ENCODE measurements at regions of chr17 and their contacts with region 1.

Region 1: DNA sequence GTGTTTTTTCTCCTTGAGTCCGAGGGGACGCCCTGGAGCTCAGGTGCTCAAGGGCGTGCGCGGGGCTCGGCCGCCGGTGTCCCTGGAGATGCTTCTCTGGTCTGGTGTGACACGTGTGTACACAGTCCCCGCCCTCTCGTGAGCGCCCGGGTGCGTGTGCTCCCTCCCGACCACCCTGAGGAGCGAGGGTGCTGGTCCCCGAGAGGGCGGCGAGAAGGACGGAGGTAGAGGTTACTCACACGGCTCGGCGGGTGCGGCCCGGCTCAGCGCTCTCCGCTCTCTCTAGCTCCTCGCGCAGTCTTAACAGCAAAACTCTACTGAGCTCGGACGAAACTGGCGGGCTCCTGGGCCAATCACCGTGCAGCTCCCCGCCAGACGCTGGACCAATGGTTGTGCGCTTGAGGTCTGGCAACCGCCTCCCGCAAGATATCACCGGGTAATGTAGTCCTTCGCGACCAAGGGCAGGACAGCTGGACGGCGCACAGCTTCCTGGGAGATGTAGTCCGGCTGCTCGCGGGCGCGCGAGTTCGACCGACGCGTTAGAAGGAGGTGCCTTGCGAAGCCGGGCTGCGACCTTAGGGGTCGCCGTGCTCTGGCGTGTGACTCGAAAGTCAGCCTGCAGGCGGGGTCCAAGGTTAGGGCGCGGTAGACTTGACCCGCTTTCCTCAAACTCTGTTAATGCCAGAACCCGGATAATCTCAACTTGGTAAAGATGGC is at the start of gene SLC25A19:
- DNase-seq: peak; percentile 98
- ATAC-seq: peak; percentile 98
- H3K4me3 Mint-ChIP-seq: peak within 1 kb of the TSS; percentile 94
- H3K27ac Mint-ChIP-seq: peak within 1 kb of the TSS; percentile 99
- H3K4me1 Mint-ChIP-seq: peaks cover 8% of the 10 kb centered on the region
- H3K27me3 Mint-ChIP-seq: no peaks in the 10 kb centered on the region; the same call in 1 of the 2 replicates
- CTCF ChIP-seq: no peak
- total RNA-seq, gene SLC25A19: 22.6 to 27.7 TPM (median 23.0 TPM) in 3 replicates

Region 2: DNA sequence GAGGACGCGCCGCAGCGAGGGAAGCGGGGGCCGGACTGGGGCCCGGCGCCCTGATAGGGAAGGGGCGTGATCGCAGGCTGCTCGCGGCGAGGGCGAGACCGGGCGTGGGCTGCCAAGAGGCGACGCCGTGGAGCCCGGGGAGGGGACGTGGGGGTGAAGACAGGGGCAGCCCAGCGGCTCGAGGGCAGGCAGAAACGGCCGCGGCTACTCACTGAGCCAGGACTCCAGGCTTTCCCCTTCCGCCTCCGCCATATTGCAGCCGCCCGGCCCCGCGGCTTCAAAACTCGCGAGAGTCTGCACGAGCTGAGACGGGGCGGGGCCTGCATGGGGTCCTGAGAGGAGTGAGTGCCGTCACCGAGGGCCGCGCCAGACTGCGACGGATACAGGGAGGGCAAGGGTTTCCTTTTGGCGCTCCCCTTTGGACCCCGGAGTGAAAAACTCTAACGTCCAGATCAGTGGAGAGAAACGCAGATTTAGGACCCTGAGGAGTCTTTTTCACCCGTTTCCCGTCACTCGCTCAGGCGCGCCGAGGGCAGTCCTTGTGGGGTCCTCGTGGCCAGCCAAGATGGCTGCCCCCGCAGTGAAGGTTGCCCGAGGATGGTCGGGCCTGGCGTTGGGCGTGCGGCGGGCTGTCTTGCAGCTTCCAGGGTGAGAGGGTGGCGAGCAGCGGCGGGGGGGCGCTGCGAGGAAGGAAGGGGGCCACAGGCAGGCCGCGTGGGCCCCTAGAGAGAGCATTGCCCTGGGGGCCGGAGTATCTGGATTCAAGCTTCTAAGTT is 27.7 kb before region 1 on chr17 and contains the starts of genes GGA3 and MRPS7:
- CTCF ChIA-PET with region 1: interaction called, 14 read pairs
- POLR2A ChIA-PET with region 1: interaction called, 10 read pairs
- DNase-seq: peak; percentile 96
- ATAC-seq: peak; percentile 96
- H3K4me3 Mint-ChIP-seq: peak within 1 kb of the TSS; percentile 98
- H3K27ac Mint-ChIP-seq: peak within 1 kb of the TSS; percentile 100
- H3K4me1 Mint-ChIP-seq: peaks cover 26% of the 10 kb centered on the region
- H3K27me3 Mint-ChIP-seq: no peaks in the 10 kb centered on the region
- CTCF ChIP-seq: no peak
- total RNA-seq, gene GGA3: 54.5 to 66.9 TPM (median 62.7 TPM) in 3 replicates
- total RNA-seq, gene MRPS7: 85.8 to 94.7 TPM (median 87.5 TPM) in 3 replicates

Region 3: DNA sequence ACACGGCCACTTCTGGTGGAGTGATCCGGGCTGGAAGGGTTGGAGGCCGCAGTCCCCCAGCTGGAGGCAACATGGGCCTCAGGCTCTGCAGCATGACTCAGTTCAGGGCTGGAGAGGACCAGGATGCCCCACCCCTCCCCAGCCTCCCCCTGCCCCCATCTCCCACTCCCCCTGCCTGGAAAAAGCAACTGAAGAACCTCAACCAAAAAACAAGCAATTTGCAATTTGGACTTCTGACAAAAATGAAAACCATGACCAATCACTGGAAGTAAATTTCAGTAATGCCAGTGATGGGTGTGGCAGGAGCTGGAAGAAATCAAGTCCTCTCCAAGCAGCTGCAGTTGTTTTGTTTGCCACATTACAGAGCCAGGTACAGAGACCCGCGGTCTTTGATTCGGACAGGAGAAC is 11.6 kb before region 1 on chr17:
- CTCF ChIA-PET with region 1: interaction called, 106 read pairs
- POLR2A ChIA-PET with region 1: interaction called, 4 read pairs
- DNase-seq: no peak
- ATAC-seq: no peak
- H3K4me3 Mint-ChIP-seq: no peak overlapping the region
- H3K27ac Mint-ChIP-seq: no peak overlapping the region
- H3K4me1 Mint-ChIP-seq: no peaks in the 10 kb centered on the region
- H3K27me3 Mint-ChIP-seq: no peaks in the 10 kb centered on the region
- CTCF ChIP-seq: no peak

Region 4: DNA sequence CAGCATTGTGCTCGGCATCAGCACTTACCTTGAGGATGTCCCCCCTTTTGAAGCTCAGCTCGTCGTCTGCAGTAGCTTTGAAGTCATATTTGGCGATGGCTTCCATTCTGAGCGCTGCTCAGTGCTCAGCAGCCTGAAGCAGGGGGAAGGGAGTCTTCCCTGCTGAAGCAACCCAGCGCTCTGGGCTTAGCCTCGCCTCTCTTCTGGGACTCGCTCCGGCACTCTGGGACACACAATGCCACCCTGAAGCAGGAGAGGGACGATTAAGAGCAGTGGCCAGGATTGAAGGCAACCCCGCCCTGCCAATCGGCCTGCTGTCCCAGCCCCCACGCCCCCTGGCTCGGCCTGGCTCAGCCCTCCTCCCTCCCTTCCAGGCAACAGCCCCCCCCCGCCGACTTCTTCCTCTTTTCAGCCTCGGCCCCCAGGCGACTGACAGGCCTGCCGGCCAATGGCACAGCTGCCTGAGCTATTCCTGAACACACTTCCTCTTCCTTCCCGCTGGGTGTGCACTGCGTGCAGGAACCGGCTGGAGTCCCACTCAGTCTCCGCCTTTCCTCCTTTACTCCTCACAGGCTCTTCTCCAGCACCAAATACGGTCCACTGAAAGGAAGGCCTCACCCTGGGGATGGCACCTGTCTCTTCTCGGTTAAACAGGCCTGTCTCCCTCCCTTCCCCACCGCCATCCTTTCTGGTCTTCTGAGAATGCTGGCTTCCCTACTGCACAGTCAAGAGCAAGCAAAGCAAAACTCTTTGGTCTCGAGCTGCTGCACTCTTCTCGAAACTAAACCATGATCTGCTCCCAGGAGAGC is 104.5 kb after region 1 on chr17:
- CTCF ChIA-PET with region 1: interaction called, 25 read pairs
- POLR2A ChIA-PET with region 1: interaction called, 12 read pairs
- DNase-seq: peak; percentile 100
- ATAC-seq: peak; percentile 97
- H3K4me3 Mint-ChIP-seq: peak overlapping the region; percentile 94
- H3K27ac Mint-ChIP-seq: peak overlapping the region; percentile 95
- H3K4me1 Mint-ChIP-seq: peaks cover 42% of the 10 kb centered on the region
- H3K27me3 Mint-ChIP-seq: peaks cover 2% of the 10 kb centered on the region; the same call in 1 of the 2 replicates
- CTCF ChIP-seq: no peak

Region 5: DNA sequence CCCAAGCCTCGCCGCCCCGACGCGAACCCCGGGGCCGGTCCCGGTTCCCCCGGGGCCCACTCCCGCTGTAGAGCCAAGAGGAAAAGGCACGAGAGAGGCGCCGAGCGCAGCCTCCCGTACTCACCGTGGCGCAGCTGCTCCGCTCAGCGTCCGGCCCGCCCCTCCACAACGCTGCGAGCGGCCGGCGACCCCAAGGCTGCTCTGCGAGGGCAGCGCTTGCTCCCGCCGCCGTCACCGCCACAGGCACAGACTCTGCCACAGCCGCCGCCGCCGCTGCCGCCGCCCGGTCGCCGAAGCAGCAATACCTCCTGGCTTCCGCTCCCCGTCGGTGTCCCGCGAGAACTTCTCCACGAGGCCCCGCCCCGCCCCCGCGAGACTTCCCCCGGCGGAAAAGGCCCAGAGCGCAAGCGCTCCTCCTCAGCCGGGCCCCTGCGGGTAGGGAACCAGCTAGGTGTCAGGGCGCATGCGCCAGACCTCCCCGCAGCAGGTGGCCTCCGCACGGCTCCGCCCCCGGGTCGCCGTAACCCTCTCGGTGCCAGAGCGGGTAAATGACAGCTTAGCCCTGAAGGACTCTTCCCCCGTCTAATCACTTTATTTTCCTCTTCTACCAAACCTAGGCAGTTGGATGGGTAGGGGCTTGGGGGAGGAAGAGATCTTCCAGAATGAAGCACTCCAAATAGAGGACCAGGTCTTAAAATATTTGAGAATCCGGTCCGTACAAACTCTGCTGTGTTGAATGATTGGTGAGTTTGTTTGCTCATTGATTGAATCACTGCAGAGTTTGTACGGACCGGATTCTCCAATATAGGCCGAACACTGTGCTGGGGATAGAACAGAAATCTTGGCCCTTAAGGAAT is 116.3 kb after region 1 on chr17 and contains the start of gene GRB2:
- CTCF ChIA-PET with region 1: interaction called, 25 read pairs
- POLR2A ChIA-PET with region 1: interaction called, 11 read pairs
- DNase-seq: peak; percentile 99
- ATAC-seq: peak; percentile 88
- H3K4me3 Mint-ChIP-seq: peak within 1 kb of the TSS; percentile 87
- H3K27ac Mint-ChIP-seq: no peak within 1 kb of the TSS
- H3K4me1 Mint-ChIP-seq: peaks cover 15% of the 10 kb centered on the region
- H3K27me3 Mint-ChIP-seq: peaks cover 3% of the 10 kb centered on the region; the same call in 1 of the 2 replicates
- CTCF ChIP-seq: no peak
- total RNA-seq, gene GRB2: 82.9 to 93.3 TPM (median 92.6 TPM) in 3 replicates

Region 6: GRCh38 chr17:75412455-75413317 is 123.4 kb after region 1 on chr17:
- CTCF ChIA-PET with region 1: interaction called, 23 read pairs
- POLR2A ChIA-PET with region 1: no interaction called
- DNase-seq: peak; percentile 78
- ATAC-seq: peak; percentile 93
- H3K4me3 Mint-ChIP-seq: 0 out of 2 replicates have a peak overlapping the region, but pooled peaks have one; percentile 10
- H3K27ac Mint-ChIP-seq: peak overlapping the region; percentile 29; the same call in 1 of the 2 replicates
- H3K4me1 Mint-ChIP-seq: peaks cover 7% of the 10 kb centered on the region
- H3K27me3 Mint-ChIP-seq: peaks cover 9% of the 10 kb centered on the region
- CTCF ChIP-seq: peak; percentile 65

Region 7: DNA sequence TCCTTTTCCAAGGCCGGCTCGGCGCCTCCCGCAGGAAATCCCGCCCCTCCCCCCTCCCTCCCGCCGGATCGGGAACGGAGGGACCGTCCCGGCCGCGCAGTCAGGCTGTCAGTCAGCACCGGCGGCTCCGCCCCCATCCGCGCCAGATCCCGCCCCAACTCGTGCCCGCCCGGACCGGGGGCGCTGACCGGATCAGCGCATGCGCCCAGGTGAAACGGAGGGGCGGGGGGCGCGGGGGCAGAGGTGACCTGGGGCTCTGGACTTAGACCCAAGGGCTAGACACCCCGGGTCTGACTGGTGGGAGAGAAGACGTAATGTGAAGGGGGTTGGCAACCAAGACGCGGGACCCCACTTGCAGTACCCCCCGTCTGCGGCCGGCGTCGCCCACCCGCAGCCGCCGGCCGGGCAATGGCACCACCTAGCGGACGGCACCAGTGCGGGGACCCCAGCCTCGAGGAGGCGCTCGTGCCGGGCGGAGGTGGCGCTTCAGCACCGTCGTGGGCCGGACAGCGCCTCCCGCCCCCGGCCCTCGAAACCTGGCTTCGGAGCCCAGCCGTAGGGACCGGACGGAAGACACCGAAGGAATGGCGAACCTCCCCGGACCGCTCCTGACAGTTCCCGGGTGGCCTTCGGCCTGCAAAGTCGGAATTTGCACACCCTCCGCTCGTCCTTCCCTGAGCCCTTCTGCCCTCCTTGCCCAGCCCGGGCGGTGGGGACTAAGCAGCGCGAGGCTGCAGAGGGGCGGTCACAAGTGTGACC is 226.4 kb after region 1 on chr17 and contains the start of gene CASKIN2:
- CTCF ChIA-PET with region 1: interaction called, 10 read pairs
- POLR2A ChIA-PET with region 1: no interaction called
- DNase-seq: peak; percentile 98
- ATAC-seq: peak; percentile 76
- H3K4me3 Mint-ChIP-seq: peak within 1 kb of the TSS; percentile 80
- H3K27ac Mint-ChIP-seq: no peak within 1 kb of the TSS
- H3K4me1 Mint-ChIP-seq: peaks cover 20% of the 10 kb centered on the region
- H3K27me3 Mint-ChIP-seq: no peaks in the 10 kb centered on the region
- CTCF ChIP-seq: peak; percentile 90
- total RNA-seq, gene CASKIN2: 31.3 to 32.2 TPM (median 31.9 TPM) in 3 replicates

Measured in WTC11 (cell line).